WTC11 (cell line): ENCODE measurements at regions of chr17 and their contacts with region 1.

Region 1: DNA sequence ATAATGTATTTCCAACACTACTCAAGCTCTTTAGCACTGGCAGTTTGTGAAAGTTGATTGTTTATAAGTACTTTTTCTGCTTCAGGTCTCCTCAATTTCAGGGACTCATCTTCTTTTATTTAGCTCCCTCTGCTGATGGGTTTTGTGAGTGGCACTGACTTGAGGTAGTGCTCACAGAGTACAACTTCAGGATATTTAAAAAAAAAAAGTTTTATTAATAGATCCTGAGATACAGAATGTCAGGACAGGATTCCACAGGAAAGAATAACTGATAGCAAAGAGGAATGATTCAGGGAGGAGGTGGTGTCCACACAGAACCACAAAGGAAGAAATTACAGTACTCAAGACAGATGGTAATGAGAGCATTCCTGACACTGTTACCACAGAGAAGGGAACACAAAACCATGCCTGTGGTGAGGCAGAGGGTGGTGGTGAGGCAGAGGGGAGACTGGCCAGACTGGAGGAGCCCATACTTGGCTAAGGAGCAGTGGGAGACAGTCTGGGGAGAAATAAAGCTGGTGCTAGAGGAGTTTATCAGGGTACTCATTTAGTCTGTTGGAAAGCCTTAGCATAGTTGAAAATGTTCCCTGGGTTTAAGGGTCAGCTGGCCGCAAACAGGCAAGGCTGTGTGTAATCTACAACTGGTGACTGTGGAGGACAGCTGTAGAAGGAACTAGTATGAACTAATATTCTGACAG is 63.7 kb downstream of the SPAG9 start:
- DNase-seq: peak; percentile 40
- ATAC-seq: peak; percentile 99
- H3K4me3 Mint-ChIP-seq: no peak overlapping the region
- H3K27ac Mint-ChIP-seq: peak overlapping the region; percentile 95
- H3K4me1 Mint-ChIP-seq: peaks cover 11% of the 10 kb centered on the region
- H3K27me3 Mint-ChIP-seq: no peaks in the 10 kb centered on the region; the same call in 1 of the 2 replicates
- CTCF ChIP-seq: peak; percentile 33; the same call in 1 of the 2 replicates

Region 2: DNA sequence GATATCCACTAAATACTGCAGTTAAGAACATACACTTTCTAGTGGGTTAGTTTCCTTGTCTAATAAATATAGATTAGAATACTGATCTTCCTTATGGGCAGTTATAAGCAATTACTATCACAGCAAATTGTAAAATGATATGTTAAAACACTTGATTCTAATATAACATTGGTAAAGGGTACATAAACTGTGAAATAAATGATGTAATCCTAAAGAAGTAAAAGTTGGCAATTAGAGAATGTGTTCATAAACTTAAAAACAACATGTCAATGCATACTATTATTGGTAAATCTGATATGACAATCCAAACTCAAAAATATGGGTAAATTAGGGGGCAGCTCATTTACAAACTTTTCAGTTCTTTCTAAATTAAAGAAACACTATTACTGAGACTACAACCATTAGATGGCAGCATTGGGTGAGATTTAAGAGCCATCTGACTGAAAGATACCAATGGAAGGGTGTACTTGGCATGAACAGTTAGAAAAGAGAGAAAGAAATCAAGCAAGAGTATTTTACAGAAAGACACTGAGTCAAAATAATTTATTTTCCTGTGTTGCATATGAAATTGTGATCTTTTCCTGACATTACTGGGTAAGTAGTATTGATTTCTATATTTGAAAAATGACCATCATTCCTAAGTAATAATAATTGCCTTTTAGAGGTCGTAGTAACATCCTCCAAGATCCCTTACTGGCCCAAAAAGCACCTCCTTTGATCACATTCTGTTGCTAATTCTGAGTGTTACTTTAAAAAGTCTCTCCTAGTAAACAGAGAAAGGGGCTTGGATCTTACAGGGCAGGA is 55.9 kb before region 1 on chr17:
- CTCF ChIA-PET with region 1: interaction called, 52 read pairs
- POLR2A ChIA-PET with region 1: no interaction called
- DNase-seq: no peak
- ATAC-seq: peak; percentile 59
- H3K4me3 Mint-ChIP-seq: no peak overlapping the region
- H3K27ac Mint-ChIP-seq: no peak overlapping the region
- H3K4me1 Mint-ChIP-seq: no peaks in the 10 kb centered on the region
- H3K27me3 Mint-ChIP-seq: no peaks in the 10 kb centered on the region
- CTCF ChIP-seq: no peak

Region 3: DNA sequence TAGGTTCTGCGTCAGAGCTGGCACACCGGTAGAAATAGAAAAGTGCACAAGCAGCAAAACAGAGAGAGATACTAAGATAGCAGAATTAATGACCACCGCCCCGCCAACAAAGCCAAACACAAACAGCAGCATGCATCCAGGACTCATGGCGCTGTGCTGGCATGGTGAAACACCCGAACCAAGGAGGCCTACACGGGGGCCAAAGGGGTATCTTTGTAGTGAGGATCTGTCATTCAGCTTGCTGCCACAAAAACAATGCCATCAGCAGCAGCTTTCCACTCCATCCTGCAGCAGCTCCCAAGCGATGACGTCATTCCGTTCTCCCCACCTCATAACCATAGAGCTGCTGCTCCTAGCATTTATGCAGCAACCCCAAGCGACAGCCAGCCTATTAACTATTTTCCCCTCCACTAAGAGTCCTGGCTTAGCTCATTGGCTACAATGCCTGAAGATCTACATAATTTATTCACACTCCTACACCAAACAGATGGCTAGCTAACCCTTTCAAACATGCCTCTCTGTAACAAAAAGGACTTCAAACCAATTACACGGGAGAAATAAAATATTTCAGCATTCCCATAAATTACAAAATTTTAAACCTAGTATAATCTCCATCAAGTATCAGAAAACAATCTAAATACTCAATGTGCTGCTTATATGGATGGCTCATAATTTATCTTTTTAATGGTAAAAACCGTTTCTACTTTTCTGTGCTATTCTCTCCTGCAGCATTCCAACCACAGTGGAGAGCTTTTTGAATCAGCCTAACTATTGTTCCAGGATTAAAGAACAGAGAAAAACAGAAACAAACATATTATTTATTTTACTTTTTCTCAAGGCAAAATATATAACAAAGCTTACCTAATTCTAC is 10.2 kb before region 1 on chr17:
- CTCF ChIA-PET with region 1: interaction called, 97 read pairs
- POLR2A ChIA-PET with region 1: interaction called, 4 read pairs
- DNase-seq: peak; percentile 74
- ATAC-seq: peak; percentile 98
- H3K4me3 Mint-ChIP-seq: no peak overlapping the region
- H3K27ac Mint-ChIP-seq: no peak overlapping the region
- H3K4me1 Mint-ChIP-seq: peaks cover 10% of the 10 kb centered on the region
- H3K27me3 Mint-ChIP-seq: no peaks in the 10 kb centered on the region
- CTCF ChIP-seq: no peak

Region 4: DNA sequence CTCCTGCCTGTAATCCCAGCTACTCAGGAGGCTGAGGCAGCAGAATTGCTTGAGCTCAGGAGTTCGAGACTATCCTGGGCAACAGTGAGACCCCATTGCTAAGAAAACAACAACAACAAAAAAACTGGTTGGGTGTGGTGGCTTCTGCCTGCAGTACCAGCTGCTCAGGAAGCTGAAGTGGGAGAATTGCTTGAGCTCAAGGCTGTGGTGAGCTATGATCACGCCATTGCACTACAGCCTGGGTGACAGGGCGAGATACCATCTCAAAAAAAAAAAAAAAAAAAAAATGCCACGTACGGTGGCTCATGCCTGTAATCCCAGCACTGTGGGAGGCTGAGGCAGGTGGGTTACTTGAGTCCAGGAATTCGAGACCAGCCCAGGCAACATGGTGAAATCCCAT is 143.3 kb after region 1 on chr17:
- CTCF ChIA-PET with region 1: no interaction called
- POLR2A ChIA-PET with region 1: no interaction called
- DNase-seq: no peak
- ATAC-seq: no peak
- H3K4me3 Mint-ChIP-seq: no peak overlapping the region
- H3K27ac Mint-ChIP-seq: no peak overlapping the region
- H3K4me1 Mint-ChIP-seq: no peaks in the 10 kb centered on the region
- H3K27me3 Mint-ChIP-seq: no peaks in the 10 kb centered on the region
- CTCF ChIP-seq: no peak